ENCODE measurements at regions of chr17 and their contacts with region 1.

Region 1: GRCh38 chr17:78013683-78014467 is 55.4 kb downstream of the TNRC6C start:
- DNase-seq: peak; percentile 75
- H3K4me3 Mint-ChIP-seq: no peak overlapping the region
- H3K27ac Mint-ChIP-seq: no peak overlapping the region
- H3K4me1 Mint-ChIP-seq: peaks cover 25% of the 10 kb centered on the region
- H3K27me3 Mint-ChIP-seq: no peaks in the 10 kb centered on the region

Region 2: DNA sequence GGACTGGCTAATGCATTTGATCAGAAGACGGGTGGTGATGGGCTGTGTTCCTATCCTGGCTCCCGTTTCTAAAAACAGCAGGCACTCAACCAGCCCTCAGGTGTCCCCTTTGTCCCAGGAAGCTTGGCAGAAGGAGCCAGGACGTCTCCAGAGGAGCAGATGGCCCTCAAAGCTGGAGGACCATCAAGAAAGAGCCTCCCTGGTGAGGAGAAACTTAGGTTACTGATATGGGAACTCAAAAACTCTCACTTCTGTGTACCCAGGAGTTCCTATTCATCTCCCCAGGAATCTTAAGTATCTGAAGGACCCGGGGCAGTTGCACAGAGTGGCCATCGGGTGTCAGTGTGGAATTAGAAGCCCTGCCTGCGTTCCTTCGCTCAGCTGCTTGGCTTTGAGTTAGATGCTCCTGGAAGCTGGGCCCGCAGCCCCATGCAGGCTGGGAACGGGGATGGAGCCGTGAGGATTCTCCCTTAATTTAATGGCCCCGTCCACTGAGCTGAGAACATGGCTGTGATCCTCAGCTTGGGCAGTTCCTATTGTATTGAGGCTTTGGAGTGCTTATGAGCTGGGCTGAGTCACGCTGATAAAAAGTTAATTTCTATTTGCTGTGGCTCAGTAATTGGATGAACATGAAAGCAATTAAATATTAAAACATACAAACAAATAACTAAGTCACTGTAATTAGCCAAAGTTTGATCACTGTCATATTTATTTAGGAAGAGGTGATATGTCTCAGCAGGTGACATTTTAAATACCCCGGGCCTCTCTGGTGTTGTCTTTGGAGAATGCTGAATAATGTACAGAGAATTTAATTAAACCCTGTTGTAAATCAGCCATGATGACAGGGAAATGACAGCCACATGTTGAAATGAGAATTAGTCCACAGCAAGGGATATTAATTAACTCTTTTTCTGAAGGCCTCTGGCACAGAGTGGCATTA is 471.1 kb before region 1 on chr17:
- CTCF ChIA-PET with region 1: interaction called, 13 read pairs
- POLR2A ChIA-PET with region 1: no interaction called
- DNase-seq: peak; percentile 75
- H3K4me3 Mint-ChIP-seq: no peak overlapping the region
- H3K27ac Mint-ChIP-seq: no peak overlapping the region
- H3K4me1 Mint-ChIP-seq: peaks cover 6% of the 10 kb centered on the region
- H3K27me3 Mint-ChIP-seq: peaks cover 10% of the 10 kb centered on the region

Region 3: DNA sequence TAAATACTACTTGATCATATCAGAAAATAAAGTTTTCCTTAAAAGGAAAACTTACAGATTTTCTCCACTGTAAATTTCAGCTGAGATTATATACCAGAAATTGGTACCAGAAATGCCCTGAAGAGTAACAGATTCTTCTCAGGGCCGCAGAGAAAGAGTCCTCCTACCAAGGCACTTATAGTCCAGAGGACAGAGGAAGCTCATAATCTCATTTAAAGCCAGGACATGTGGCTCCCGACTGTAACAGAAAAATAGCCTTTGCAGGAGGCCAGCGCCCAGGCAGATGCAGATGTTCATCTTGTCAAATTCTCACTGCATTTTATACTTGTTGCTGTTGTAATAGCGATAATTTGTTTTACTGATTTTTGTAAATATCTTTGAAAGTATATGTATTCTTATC is 11.7 kb before region 1 on chr17:
- CTCF ChIA-PET with region 1: interaction called, 10 read pairs
- POLR2A ChIA-PET with region 1: no interaction called
- DNase-seq: no peak
- H3K4me3 Mint-ChIP-seq: no peak overlapping the region
- H3K27ac Mint-ChIP-seq: no peak overlapping the region
- H3K4me1 Mint-ChIP-seq: peaks cover 14% of the 10 kb centered on the region
- H3K27me3 Mint-ChIP-seq: no peaks in the 10 kb centered on the region

Measured in activated CD4-positive, alpha-beta T cell treated with anti-CD3 and anti-CD28 coated beads, Interleukin-2, amount 10 ng/mL, durations not matched to agents 7 days and 5 days (primary cell).